Dendritic cell treated with granulocyte-macrophage colony-stimulating factor and Interleukin-4, amounts not matched to agents 40 ng/mL and 50 ng/mL, for 4 days (primary cell): ENCODE measurements at regions of chr6 and their contacts with region 1.

Region 1: GRCh38 chr6:130047088-130047995 is 29.0 kb downstream of the L3MBTL3 start:
- H3K4me3 Mint-ChIP-seq: no peak overlapping the region
- H3K27ac Mint-ChIP-seq: no peak overlapping the region
- H3K4me1 Mint-ChIP-seq: peaks cover 9% of the 10 kb centered on the region
- H3K27me3 Mint-ChIP-seq: no peaks in the 10 kb centered on the region

Region 2: GRCh38 chr6:129875610-129876520 is 171.5 kb before region 1 on chr6:
- intact Hi-C with region 1: no loop called
- H3K4me3 Mint-ChIP-seq: no peak overlapping the region
- H3K27ac Mint-ChIP-seq: no peak overlapping the region
- H3K4me1 Mint-ChIP-seq: peaks cover 30% of the 10 kb centered on the region
- H3K27me3 Mint-ChIP-seq: peaks cover 34% of the 10 kb centered on the region

Region 3: DNA sequence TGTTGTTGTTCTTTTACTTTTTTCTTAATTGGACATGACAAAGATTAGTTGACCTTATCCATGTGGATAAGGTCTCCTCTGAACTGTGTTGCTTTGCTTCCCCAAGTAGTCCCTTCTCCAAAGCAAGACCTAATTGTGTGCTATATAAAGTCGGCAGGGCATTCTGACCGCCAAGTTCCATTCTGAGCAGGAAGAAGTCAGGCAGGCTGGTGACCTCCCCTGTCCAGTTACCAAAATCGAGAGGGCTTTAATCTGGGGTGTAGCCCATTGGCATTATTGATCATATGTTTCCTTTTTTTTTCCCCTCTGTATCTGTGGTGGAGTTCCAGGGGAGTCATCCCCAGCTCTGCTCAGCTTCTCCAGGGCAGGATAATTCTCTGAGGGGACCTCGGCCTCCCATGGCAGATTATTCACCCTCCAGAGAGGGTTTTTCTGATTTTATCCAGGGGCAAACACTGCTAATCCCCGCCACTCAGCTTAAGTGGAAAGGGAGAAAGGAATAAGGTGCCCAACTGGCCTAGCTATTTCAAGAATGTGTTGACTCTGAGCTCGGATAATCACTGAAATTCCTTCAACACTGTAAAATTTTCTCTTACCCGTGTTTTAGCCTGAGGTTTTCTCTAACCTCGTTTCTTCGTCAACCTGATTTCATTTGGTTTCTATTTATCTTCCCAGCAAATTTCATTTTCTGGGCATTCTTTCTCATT is 100.8 kb before region 1 on chr6:
- intact Hi-C with region 1: no loop called
- H3K4me3 Mint-ChIP-seq: no peak overlapping the region
- H3K27ac Mint-ChIP-seq: no peak overlapping the region
- H3K4me1 Mint-ChIP-seq: no peaks in the 10 kb centered on the region
- H3K27me3 Mint-ChIP-seq: peaks cover 4% of the 10 kb centered on the region

Region 4: DNA sequence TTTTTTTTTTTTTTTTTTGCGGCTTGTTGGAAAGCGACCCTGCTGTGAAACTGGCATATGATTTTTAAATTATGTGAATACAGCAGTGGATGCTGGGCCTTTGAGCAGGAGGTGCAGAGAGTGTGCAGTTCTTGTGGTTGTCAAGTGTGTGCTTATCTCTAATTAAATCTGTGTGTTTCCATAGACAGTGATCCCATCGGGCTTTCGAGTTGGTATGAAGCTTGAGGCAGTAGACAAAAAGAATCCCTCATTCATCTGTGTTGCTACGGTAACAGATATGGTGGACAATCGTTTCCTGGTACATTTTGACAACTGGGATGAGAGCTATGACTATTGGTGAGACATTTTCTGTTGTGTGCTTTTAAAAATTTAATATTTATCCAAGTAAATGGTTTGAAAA is 23.4 kb after region 1 on chr6:
- intact Hi-C with region 1: no loop called
- H3K4me3 Mint-ChIP-seq: no peak overlapping the region
- H3K27ac Mint-ChIP-seq: no peak overlapping the region
- H3K4me1 Mint-ChIP-seq: peaks cover 11% of the 10 kb centered on the region
- H3K27me3 Mint-ChIP-seq: no peaks in the 10 kb centered on the region

Region 5: GRCh38 chr6:130282234-130282995 is 235.1 kb after region 1 on chr6:
- intact Hi-C with region 1: loop called (anchors 10 kb)
- H3K4me3 Mint-ChIP-seq: no peak overlapping the region
- H3K27ac Mint-ChIP-seq: no peak overlapping the region
- H3K4me1 Mint-ChIP-seq: no peaks in the 10 kb centered on the region
- H3K27me3 Mint-ChIP-seq: no peaks in the 10 kb centered on the region

Region 6: DNA sequence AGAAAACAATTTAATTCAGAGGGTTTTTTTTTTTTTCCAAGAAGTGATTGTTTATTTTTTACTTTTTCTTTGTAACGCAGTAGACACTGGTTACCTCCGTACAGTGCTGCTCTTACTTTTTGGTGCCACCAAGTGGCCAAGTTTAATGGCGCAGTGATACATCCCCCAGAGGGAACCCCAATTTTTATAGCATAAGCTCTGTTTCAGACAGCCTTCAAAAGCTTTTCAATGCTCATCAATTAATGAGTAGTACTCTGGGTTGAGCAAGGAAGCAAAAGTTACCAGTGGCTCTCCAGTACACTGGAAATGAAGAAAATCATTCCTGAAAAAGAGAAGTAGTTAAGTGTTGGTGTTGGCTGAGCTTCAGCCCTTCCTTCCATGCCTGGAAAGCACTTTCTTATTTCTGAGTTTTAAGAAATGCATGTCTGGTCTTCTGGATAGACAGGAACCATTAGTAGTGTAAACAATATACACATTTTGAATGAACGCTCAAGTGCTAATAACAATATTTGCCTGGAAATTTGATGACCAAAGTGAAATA is 650.7 kb after region 1 on chr6:
- intact Hi-C with region 1: loop called (anchors 10 kb)
- H3K4me3 Mint-ChIP-seq: no peak overlapping the region
- H3K27ac Mint-ChIP-seq: no peak overlapping the region
- H3K4me1 Mint-ChIP-seq: no peaks in the 10 kb centered on the region
- H3K27me3 Mint-ChIP-seq: no peaks in the 10 kb centered on the region

Region 7: GRCh38 chr6:130872250-130873095 is 825.1 kb after region 1 on chr6:
- intact Hi-C with region 1: loop called (anchors 5 kb)
- H3K4me3 Mint-ChIP-seq: no peak overlapping the region
- H3K27ac Mint-ChIP-seq: no peak overlapping the region
- H3K4me1 Mint-ChIP-seq: no peaks in the 10 kb centered on the region
- H3K27me3 Mint-ChIP-seq: no peaks in the 10 kb centered on the region